WTC11 (cell line): ENCODE measurements at regions of chr10 and their contacts with region 1.

Region 1: GRCh38 chr10:95246579-95247051 is 44.2 kb downstream of the PDLIM1 start:
- DNase-seq: peak; percentile 86
- ATAC-seq: peak; percentile 71
- H3K4me3 Mint-ChIP-seq: no peak overlapping the region
- H3K27ac Mint-ChIP-seq: no peak overlapping the region
- H3K4me1 Mint-ChIP-seq: peaks cover 52% of the 10 kb centered on the region
- H3K27me3 Mint-ChIP-seq: no peaks in the 10 kb centered on the region
- CTCF ChIP-seq: peak; percentile 87

Region 2: DNA sequence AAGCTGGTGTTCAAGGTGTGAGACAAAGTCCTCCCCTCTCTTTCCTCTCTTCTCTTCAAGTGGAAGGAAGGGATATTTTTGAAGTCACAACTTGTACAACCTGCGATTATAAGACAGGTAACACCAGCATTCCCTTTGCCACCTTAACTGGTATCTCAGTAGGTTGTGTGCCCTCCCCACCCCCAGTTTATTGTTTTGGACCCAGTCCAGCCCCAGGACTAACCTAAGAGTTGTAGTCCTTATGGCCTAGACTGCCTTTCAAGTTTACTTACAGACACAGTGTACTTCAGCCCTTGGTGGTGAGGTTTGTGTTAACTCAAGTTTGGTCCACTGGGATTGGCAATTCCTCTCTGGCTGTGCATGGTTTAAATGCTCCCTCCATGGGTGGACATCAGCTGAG is 150.5 kb before region 1 on chr10:
- CTCF ChIA-PET with region 1: no interaction called
- POLR2A ChIA-PET with region 1: no interaction called
- DNase-seq: no peak
- ATAC-seq: no peak
- H3K4me3 Mint-ChIP-seq: no peak overlapping the region
- H3K27ac Mint-ChIP-seq: no peak overlapping the region
- H3K4me1 Mint-ChIP-seq: no peaks in the 10 kb centered on the region
- H3K27me3 Mint-ChIP-seq: no peaks in the 10 kb centered on the region
- CTCF ChIP-seq: no peak

Region 3: GRCh38 chr10:95133016-95133752 is 113.4 kb before region 1 on chr10:
- CTCF ChIA-PET with region 1: interaction called, 46 read pairs
- POLR2A ChIA-PET with region 1: no interaction called
- DNase-seq: peak; percentile 88
- ATAC-seq: peak; percentile 96
- H3K4me3 Mint-ChIP-seq: no peak overlapping the region
- H3K27ac Mint-ChIP-seq: peak overlapping the region; percentile 15
- H3K4me1 Mint-ChIP-seq: peaks cover 8% of the 10 kb centered on the region
- H3K27me3 Mint-ChIP-seq: peaks cover 2% of the 10 kb centered on the region; the same call in 1 of the 2 replicates
- CTCF ChIP-seq: peak; percentile 88

Region 4: GRCh38 chr10:95201736-95202135 is 44.9 kb before region 1 on chr10:
- CTCF ChIA-PET with region 1: interaction called, 53 read pairs
- POLR2A ChIA-PET with region 1: no interaction called
- DNase-seq: no peak
- ATAC-seq: peak; percentile 60
- H3K4me3 Mint-ChIP-seq: no peak overlapping the region
- H3K27ac Mint-ChIP-seq: no peak overlapping the region
- H3K4me1 Mint-ChIP-seq: peaks cover 25% of the 10 kb centered on the region
- H3K27me3 Mint-ChIP-seq: no peaks in the 10 kb centered on the region
- CTCF ChIP-seq: no peak

Region 5: DNA sequence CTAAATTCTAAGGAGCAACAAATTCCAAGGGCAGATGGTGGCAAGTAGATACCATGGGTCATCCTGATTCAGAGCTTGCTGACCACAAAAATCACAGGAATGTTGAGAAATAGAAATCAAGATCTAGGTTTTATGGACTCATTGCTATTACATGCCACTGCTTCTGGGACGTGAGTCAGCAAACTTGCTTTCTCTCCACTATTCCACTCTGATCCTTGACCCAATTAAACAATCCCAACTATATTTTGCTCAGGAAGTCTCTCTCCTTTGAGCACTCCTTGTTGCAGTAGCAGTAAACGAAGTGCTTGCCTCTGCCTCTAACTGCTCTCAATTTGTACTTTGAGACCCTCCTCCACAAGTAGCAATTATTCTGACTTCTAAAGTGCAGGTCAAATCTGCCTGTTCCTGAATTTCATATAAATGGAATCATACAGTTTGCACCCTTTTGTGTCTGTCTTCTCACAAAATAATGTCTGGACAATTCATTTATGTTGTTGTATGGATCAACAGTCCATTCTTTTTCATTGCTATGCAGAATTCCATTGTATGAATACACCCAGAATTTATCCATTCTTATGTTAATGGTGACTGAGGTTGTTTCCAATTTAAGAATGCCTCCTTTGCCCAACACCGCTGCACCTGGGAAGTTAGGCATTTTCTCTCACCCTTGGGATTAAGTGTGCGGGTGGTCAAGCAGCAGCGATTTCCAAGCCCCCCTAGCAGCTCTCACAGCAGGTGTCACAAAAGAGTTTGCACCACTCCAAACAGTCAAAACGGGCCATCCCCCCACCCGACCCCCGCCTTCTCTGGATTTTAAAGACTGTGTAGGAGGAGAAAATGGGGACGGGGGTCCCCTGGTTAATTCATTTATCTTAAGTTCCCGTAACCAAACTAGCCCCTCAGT is 16.6 kb before region 1 on chr10:
- CTCF ChIA-PET with region 1: interaction called, 29 read pairs
- POLR2A ChIA-PET with region 1: interaction called, 9 read pairs
- DNase-seq: peak; percentile 66
- ATAC-seq: peak; percentile 36
- H3K4me3 Mint-ChIP-seq: peak overlapping the region; percentile 45
- H3K27ac Mint-ChIP-seq: peak overlapping the region; percentile 100
- H3K4me1 Mint-ChIP-seq: peaks cover 57% of the 10 kb centered on the region
- H3K27me3 Mint-ChIP-seq: no peaks in the 10 kb centered on the region
- CTCF ChIP-seq: no peak

Region 6: GRCh38 chr10:95266674-95267095 is 20.1 kb after region 1 on chr10:
- CTCF ChIA-PET with region 1: interaction called, 22 read pairs
- POLR2A ChIA-PET with region 1: no interaction called
- DNase-seq: no peak
- ATAC-seq: no peak
- H3K4me3 Mint-ChIP-seq: no peak overlapping the region
- H3K27ac Mint-ChIP-seq: peak overlapping the region; percentile 97
- H3K4me1 Mint-ChIP-seq: peaks cover 61% of the 10 kb centered on the region
- H3K27me3 Mint-ChIP-seq: no peaks in the 10 kb centered on the region
- CTCF ChIP-seq: no peak

Region 7: GRCh38 chr10:95289003-95289920 is 42.6 kb after region 1 on chr10:
- CTCF ChIA-PET with region 1: interaction called, 11 read pairs
- POLR2A ChIA-PET with region 1: interaction called, 3 read pairs
- DNase-seq: peak; percentile 39
- ATAC-seq: peak; percentile 41
- H3K4me3 Mint-ChIP-seq: peak overlapping the region; percentile 86
- H3K27ac Mint-ChIP-seq: peak overlapping the region; percentile 80
- H3K4me1 Mint-ChIP-seq: peaks cover 61% of the 10 kb centered on the region
- H3K27me3 Mint-ChIP-seq: peaks cover 27% of the 10 kb centered on the region
- CTCF ChIP-seq: no peak

Region 8: GRCh38 chr10:95374597-95375209 is 128.1 kb after region 1 on chr10:
- CTCF ChIA-PET with region 1: interaction called, 10 read pairs
- POLR2A ChIA-PET with region 1: no interaction called
- DNase-seq: peak; percentile 86
- ATAC-seq: peak; percentile 98
- H3K4me3 Mint-ChIP-seq: no peak overlapping the region
- H3K27ac Mint-ChIP-seq: no peak overlapping the region
- H3K4me1 Mint-ChIP-seq: peaks cover 28% of the 10 kb centered on the region
- H3K27me3 Mint-ChIP-seq: no peaks in the 10 kb centered on the region
- CTCF ChIP-seq: peak; percentile 99